PC-9 (cell line): ENCODE measurements at regions of chr3 and their contacts with region 1.

Region 1: GRCh38 chr3:49775538-49775937 is 10.8 kb downstream of the IP6K1 start:
- DNase-seq: no peak
- H3K4me3 ChIP-seq: no peak overlapping the region
- H3K27ac ChIP-seq: no peak overlapping the region
- H3K4me1 ChIP-seq: no peaks in the 10 kb centered on the region
- H3K27me3 ChIP-seq: no peaks in the 10 kb centered on the region
- CTCF ChIP-seq: no peak

Region 2: DNA sequence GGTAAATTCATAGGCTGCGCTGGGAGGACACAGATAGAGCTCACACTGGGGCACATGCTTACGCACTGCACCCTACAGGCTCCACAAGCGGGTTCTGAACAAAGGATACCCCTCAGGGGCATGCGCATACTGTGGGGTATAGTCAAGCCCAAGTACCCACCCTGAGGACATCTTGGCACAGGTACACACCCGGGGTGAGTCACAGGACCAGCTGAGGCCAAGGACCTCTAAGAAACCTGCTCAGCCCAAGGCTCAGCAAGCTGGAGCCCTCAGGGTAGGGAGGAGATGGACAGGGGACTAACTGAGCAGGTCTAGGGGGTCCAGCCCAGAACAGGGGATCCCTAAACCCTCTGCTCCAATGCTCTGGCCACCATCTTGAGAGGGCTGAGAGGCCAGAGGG is 1274.9 kb before region 1 on chr3:
- CTCF ChIA-PET with region 1: no interaction called
- POLR2A ChIA-PET with region 1: interaction called, 10 read pairs
- intact Hi-C with region 1: no loop called
- DNase-seq: peak; percentile 66 to 74
- H3K4me3 ChIP-seq: no peak overlapping the region
- H3K27ac ChIP-seq: no peak overlapping the region
- H3K4me1 ChIP-seq: peaks cover 45% of the 10 kb centered on the region
- H3K27me3 ChIP-seq: no peaks in the 10 kb centered on the region
- CTCF ChIP-seq: no peak

Region 3: GRCh38 chr3:49759226-49759625 is 16.3 kb before region 1 on chr3:
- CTCF ChIA-PET with region 1: no interaction called
- POLR2A ChIA-PET with region 1: interaction called, 13 read pairs
- intact Hi-C with region 1: no loop called
- DNase-seq: no peak
- H3K4me3 ChIP-seq: no peak overlapping the region
- H3K27ac ChIP-seq: no peak overlapping the region
- H3K4me1 ChIP-seq: no peaks in the 10 kb centered on the region
- H3K27me3 ChIP-seq: no peaks in the 10 kb centered on the region
- CTCF ChIP-seq: no peak

Region 4: GRCh38 chr3:50044976-50045375 is 269.4 kb after region 1 on chr3:
- CTCF ChIA-PET with region 1: interaction called, 17 read pairs
- POLR2A ChIA-PET with region 1: no interaction called
- intact Hi-C with region 1: no loop called
- DNase-seq: no peak
- H3K4me3 ChIP-seq: no peak overlapping the region
- H3K27ac ChIP-seq: no peak overlapping the region
- H3K4me1 ChIP-seq: no peaks in the 10 kb centered on the region
- H3K27me3 ChIP-seq: no peaks in the 10 kb centered on the region
- CTCF ChIP-seq: no peak